GM10248 (cell line): ENCODE measurements at regions of chr1 and their contacts with region 1.

Region 1: DNA sequence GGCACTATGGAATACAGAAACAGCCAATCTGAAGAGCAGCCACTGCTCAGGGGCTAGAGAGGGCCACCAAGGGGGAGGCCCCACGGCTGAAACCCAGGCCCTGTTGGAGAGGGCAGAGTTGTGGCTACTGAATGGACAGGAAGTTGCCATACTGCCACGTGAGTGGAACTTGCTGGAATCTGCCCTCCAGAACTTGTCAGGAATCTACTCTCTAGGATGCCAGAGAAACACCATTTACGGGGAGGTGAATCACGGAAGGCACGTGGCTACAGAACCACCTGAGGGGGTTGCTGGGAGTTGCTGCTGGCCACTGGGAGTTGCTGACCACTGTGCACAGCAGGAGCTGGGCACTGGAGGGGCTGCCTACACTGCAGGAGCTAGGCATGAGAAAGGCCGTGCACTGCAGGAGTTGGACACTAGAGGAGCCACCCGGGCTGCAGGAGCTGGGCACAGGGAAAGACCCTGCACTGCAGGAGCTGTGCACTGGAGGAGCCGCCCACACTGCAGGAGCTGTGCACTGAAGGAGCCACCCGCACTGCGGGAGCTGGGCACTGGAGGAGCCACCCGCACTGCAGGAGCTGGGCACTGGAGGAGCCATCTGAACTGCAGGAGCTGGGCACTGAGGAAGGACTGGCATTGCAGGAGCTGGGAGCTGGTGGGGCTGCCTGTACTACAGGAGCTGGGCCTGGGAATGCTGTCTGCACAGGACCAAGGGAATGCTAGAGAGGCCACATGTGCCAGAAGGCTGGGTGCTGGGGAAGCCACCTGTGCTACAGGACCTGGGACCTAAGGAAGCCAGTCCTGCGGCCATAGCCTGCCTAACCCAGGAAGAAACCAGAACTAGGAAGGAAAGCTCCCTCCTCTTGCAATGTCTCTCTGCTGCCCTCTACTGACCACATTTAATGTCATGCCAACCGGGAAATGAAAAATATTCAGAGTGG is 343.4 kb downstream of the MATN1 start:
- DNase-seq: peak; percentile 88
- CTCF ChIP-seq: peak; percentile 82

Region 2: DNA sequence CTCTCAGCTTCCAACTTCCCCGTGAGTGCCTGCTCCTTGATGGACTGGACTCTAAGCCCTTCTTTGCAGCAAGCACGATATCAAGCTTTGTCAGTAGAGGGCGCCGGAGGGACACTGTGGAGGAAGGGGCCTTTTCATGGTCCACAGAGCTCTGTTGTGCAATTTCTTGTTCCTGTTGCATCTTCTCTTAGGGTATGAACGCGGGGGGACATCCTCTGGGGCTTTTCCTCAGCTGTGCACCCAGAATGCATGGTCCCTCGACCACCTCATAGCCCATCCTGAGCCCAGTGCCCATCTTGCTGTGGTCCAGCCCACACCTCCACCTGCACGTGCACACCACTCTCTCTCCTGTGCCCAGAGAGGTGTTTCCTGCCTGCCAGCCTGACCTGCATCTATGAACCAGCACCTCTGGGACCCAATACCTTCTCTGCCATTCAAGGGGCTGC is 586.8 kb before region 1 on chr1:
- CTCF ChIA-PET with region 1: interaction called, 13 read pairs
- POLR2A ChIA-PET with region 1: no interaction called
- DNase-seq: peak; percentile 62
- CTCF ChIP-seq: peak; percentile 67

Region 3: DNA sequence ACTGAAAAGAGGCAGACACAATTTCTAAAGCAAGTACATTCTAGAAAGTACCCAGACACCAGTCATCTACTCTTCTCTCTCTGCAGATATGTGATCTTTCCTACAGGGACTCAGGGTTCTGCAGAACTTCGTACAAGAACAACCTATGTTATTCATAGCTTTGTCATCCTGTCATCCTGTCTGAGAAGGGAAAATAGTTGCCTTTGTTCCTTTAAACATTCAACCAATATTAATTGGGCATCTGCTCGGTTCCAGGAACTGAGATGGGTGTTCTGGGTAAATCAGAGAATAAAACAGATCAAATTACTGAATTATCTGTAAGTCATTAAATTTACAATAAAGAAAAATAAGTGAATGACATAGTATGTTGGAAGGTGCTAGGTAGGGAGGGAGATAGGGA is 161.5 kb before region 1 on chr1:
- CTCF ChIA-PET with region 1: no interaction called
- POLR2A ChIA-PET with region 1: no interaction called
- DNase-seq: no peak
- CTCF ChIP-seq: no peak

Region 4: DNA sequence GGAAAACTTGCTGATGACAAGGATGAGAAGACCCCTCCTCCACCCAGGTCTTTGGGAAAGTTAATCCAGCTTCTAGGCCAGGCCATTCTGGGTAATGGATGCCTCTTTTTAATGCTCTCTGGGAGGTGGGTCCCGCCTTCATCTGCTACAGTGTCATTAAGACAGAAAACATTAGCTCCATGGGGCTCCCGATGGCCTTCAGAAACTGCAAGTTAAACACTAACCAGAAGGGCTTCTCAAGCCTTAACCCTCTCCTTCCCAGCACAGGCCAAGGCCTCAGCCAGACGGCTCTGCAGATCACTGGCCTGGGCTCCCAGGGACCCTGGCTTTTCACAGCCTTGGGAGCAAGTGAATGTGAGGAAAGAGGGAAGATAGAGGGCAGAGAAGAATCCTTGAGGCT is 21.5 kb before region 1 on chr1:
- CTCF ChIA-PET with region 1: interaction called, 11 read pairs
- POLR2A ChIA-PET with region 1: no interaction called
- DNase-seq: no peak
- CTCF ChIP-seq: no peak

Region 5: GRCh38 chr1:30368651-30369240 is 11.2 kb before region 1 on chr1:
- CTCF ChIA-PET with region 1: interaction called, 17 read pairs
- POLR2A ChIA-PET with region 1: no interaction called
- DNase-seq: no peak
- CTCF ChIP-seq: no peak

Region 6: DNA sequence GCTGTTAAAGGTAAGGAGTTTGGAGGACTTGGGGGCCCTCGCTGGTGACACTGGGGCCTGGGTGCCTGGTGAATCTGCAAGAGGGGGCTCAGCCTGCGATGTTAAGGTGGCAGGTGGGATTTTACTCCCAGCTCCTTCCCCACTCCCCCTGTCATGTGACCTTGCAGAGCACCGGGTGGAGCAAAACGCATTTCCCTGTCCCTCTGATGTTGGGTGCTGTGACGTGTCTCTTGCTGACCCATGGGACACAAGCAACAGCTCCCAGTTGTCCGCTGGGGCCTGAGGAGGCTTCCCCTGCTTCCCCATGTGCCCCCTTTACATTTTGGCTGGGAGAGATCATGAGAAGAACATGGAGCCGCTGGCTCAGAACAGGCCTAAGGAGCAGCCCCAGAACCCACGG is 24.4 kb after region 1 on chr1:
- CTCF ChIA-PET with region 1: interaction called, 12 read pairs
- POLR2A ChIA-PET with region 1: no interaction called
- DNase-seq: no peak
- CTCF ChIP-seq: no peak

Region 7: GRCh38 chr1:30707412-30708360 is 327.7 kb after region 1 on chr1:
- CTCF ChIA-PET with region 1: interaction called, 10 read pairs
- POLR2A ChIA-PET with region 1: no interaction called
- DNase-seq: peak; percentile 81
- CTCF ChIP-seq: peak; percentile 84